ENCODE measurements at regions of chr3 and their contacts with region 1.

Region 1: GRCh38 chr3:150603153-150603979 is at the start of gene SELENOT:
- DNase-seq: peak; percentile 94 to 98 (median 96)
- ATAC-seq: peak; percentile 93 to 97 (median 97)
- H3K4me3 ChIP-seq: peak within 1 kb of the TSS; percentile 60 to 96 (median 79)
- H3K27ac ChIP-seq: peak within 1 kb of the TSS; percentile 82 to 99 (median 92)
- H3K4me1 ChIP-seq: peaks cover 0 to 67% (median 38%) of the 10 kb centered on the region in 12 donors
- H3K27me3 ChIP-seq: no peaks in the 10 kb centered on the region
- CTCF ChIP-seq: peak in 11 of 12 donors; percentile 14 to 56 (median 28)
- POLR2A ChIP-seq: peak; percentile 67 to 84
- total RNA-seq, gene SELENOT: 62.7 to 103 (median 80.1) TPM

Region 2: GRCh38 chr3:150703299-150704134 is 100.2 kb after region 1 on chr3 and contains the start of gene ERICH6:
- intact Hi-C with region 1: loop called in 7 of 10 experiments (anchors 5 to 10 kb)
- DNase-seq: peak; percentile 91 to 95 (median 93)
- ATAC-seq: peak; percentile 99
- H3K4me3 ChIP-seq: peak within 1 kb of the TSS; percentile 34 to 83 (median 72)
- H3K27ac ChIP-seq: peak within 1 kb of the TSS; percentile 25 to 90 (median 80)
- H3K4me1 ChIP-seq: peaks cover 0 to 13% (median 7%) of the 10 kb centered on the region in 12 donors
- H3K27me3 ChIP-seq: no peaks in the 10 kb centered on the region
- CTCF ChIP-seq: peak in 7 of 12 donors; percentile 5 to 16 (median 9)
- POLR2A ChIP-seq: peak in 1 of 2 donors; percentile 47
- total RNA-seq, gene ERICH6: 0.32 to 0.54 TPM in 2 of 9 donors, not detected in the others

Region 3: GRCh38 chr3:150763122-150763841 is 159.9 kb after region 1 on chr3 and contains the start of gene SIAH2:
- intact Hi-C with region 1: loop called in 3 of 10 experiments (anchors 2 to 10 kb)
- DNase-seq: peak; percentile 93 to 96 (median 95)
- ATAC-seq: peak; percentile 89 to 95 (median 92)
- H3K4me3 ChIP-seq: peak within 1 kb of the TSS; percentile 48 to 93 (median 83)
- H3K27ac ChIP-seq: peak within 1 kb of the TSS; percentile 87 to 99 (median 96)
- H3K4me1 ChIP-seq: peaks cover 5 to 42% (median 29%) of the 10 kb centered on the region in 12 donors
- H3K27me3 ChIP-seq: no peaks in the 10 kb centered on the region
- CTCF ChIP-seq: peak in 1 of 12 donors; percentile 9
- POLR2A ChIP-seq: peak in 1 of 2 donors; percentile 89
- total RNA-seq, gene SIAH2: 16.9 to 38.7 (median 23.4) TPM